HCT116 (cell line): ENCODE measurements at regions of chr13 and their contacts with region 1.

Region 1: DNA sequence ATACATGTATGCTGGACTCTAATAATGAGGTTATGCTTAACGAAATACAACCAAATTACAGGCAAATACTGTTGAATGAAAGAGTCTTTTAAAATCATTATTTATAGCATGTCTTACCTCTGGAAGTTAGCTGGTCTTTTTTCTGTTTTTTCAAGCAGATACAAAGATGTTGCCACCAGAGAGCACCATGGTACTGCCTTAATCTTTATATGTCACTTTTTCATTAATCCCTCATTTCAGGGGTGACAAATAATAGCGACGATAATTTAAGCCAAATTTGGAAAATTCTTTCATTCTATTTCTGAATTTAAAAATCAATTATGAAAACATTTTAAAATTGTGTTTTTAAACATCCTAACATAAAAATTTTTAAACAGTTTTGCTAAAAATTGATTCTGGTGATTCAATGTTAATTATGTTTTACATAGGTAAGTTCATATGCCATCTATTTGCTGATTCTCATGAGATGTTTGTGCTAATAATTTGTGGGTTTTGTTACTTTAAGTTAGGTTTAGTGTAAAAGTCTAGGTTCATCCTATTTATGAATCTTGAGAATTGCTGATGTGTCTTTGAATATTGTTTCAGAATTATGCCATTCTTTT is 379.3 kb upstream of the SGCG start:
- DNase-seq: no peak
- ATAC-seq: no peak
- H3K4me3 ChIP-seq: no peak overlapping the region
- H3K27ac ChIP-seq: no peak overlapping the region
- H3K4me1 ChIP-seq: no peaks in the 10 kb centered on the region
- H3K27me3 ChIP-seq: no peaks in the 10 kb centered on the region
- CTCF ChIP-seq: peak in 2 of 3 experiments; percentile 16 to 39; a peak in 3 of 6 replicates
- POLR2A ChIP-seq: no peak
- RAD21 ChIP-seq: peak; percentile 54

Region 2: GRCh38 chr13:20942938-20943559 is 1858.5 kb before region 1 on chr13:
- CTCF ChIA-PET with region 1: interaction called, 11 read pairs
- POLR2A ChIA-PET with region 1: no interaction called
- RAD21 ChIA-PET with region 1: no interaction called
- intact Hi-C with region 1: loop called (anchors 2 kb)
- DNase-seq: no peak
- ATAC-seq: no peak
- H3K4me3 ChIP-seq: no peak overlapping the region
- H3K27ac ChIP-seq: no peak overlapping the region
- H3K4me1 ChIP-seq: peaks cover 0 to 8% of the 10 kb centered on the region in 2 experiments; a peak in 2 of 4 replicates
- H3K27me3 ChIP-seq: no peaks in the 10 kb centered on the region
- CTCF ChIP-seq: no peak
- POLR2A ChIP-seq: no peak
- RAD21 ChIP-seq: no peak

Region 3: GRCh38 chr13:21483748-21484147 is 1317.8 kb before region 1 on chr13:
- CTCF ChIA-PET with region 1: no interaction called
- POLR2A ChIA-PET with region 1: no interaction called
- RAD21 ChIA-PET with region 1: no interaction called
- intact Hi-C with region 1: loop called (anchors 2 kb)
- DNase-seq: no peak
- ATAC-seq: no peak
- H3K4me3 ChIP-seq: no peak overlapping the region
- H3K27ac ChIP-seq: no peak overlapping the region
- H3K4me1 ChIP-seq: 0 out of 4 replicates have a peak, but pooled peaks cover 0 to 3% of the 10 kb centered on the region in 2 experiments
- H3K27me3 ChIP-seq: no peaks in the 10 kb centered on the region
- CTCF ChIP-seq: no peak
- POLR2A ChIP-seq: no peak
- RAD21 ChIP-seq: no peak

Region 4: GRCh38 chr13:22372261-22372660 is 429.2 kb before region 1 on chr13:
- CTCF ChIA-PET with region 1: no interaction called
- POLR2A ChIA-PET with region 1: no interaction called
- RAD21 ChIA-PET with region 1: no interaction called
- intact Hi-C with region 1: no loop called
- DNase-seq: no peak
- ATAC-seq: no peak
- H3K4me3 ChIP-seq: no peak overlapping the region
- H3K27ac ChIP-seq: no peak overlapping the region
- H3K4me1 ChIP-seq: no peaks in the 10 kb centered on the region
- H3K27me3 ChIP-seq: no peaks in the 10 kb centered on the region
- CTCF ChIP-seq: no peak
- POLR2A ChIP-seq: no peak
- RAD21 ChIP-seq: no peak

Region 5: GRCh38 chr13:23020223-23020843 is 218.8 kb after region 1 on chr13:
- CTCF ChIA-PET with region 1: interaction called, 18 read pairs
- POLR2A ChIA-PET with region 1: no interaction called
- RAD21 ChIA-PET with region 1: interaction called, 3 to 6 read pairs
- intact Hi-C with region 1: loop called (anchors 2 kb)
- DNase-seq: peak; percentile 61
- ATAC-seq: peak; percentile 100
- H3K4me3 ChIP-seq: no peak overlapping the region
- H3K27ac ChIP-seq: no peak overlapping the region
- H3K4me1 ChIP-seq: no peaks in the 10 kb centered on the region
- H3K27me3 ChIP-seq: no peaks in the 10 kb centered on the region
- CTCF ChIP-seq: peak; percentile 40 to 86 (median 84); a peak in 5 of 6 replicates
- POLR2A ChIP-seq: no peak
- RAD21 ChIP-seq: peak; percentile 49

Region 6: DNA sequence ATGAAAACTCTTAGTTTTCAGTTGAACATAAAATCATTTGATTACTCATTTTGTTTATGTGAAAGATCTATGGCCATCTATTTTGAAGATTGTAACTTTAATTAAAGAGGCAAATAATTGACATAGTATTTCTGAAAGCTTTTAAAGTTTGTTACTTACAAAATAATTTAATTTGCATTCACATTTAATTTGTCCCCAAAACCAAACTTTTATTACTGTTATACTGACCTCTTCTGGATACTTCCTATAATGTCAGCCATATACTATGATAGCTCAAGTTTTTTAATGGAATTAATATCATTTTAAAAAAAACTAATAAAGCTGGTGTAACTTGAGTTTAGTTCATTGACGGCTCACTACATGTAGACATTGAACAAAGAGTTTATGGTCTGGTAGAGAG is 374.4 kb after region 1 on chr13:
- CTCF ChIA-PET with region 1: interaction called, 34 read pairs
- POLR2A ChIA-PET with region 1: no interaction called
- RAD21 ChIA-PET with region 1: interaction called in 1 of 2 experiments, 4 read pairs
- intact Hi-C with region 1: loop called (anchors 1 kb)
- DNase-seq: peak; percentile 3
- ATAC-seq: no peak
- H3K4me3 ChIP-seq: no peak overlapping the region
- H3K27ac ChIP-seq: no peak overlapping the region
- H3K4me1 ChIP-seq: no peaks in the 10 kb centered on the region
- H3K27me3 ChIP-seq: no peaks in the 10 kb centered on the region
- CTCF ChIP-seq: peak in 1 of 3 experiments; percentile 51; a peak in 2 of 6 replicates
- POLR2A ChIP-seq: no peak
- RAD21 ChIP-seq: peak; percentile 34

Region 7: DNA sequence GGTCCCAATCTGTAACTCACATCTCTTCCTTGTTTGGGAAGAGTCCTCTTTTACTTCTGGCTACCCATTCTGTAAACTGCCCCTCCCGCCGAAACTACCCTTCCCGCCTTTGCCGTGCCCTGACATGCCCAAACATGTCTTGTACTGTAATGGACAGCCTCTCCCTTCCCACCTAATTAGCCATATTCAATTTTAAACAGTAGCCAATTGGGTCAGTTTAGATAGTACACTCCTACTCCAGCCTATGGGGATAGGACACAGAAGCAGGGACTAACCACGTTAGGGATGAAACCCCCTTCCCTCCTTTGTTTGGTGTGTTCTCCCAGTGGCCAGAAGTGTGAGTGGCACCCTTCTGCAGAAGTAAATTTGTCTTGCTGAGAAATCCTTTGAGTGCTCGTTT is 597.8 kb after region 1 on chr13:
- CTCF ChIA-PET with region 1: no interaction called
- POLR2A ChIA-PET with region 1: no interaction called
- RAD21 ChIA-PET with region 1: no interaction called
- intact Hi-C with region 1: no loop called
- DNase-seq: no peak
- ATAC-seq: no peak
- H3K4me3 ChIP-seq: no peak overlapping the region
- H3K27ac ChIP-seq: no peak overlapping the region
- H3K4me1 ChIP-seq: no peaks in the 10 kb centered on the region
- H3K27me3 ChIP-seq: no peaks in the 10 kb centered on the region
- CTCF ChIP-seq: no peak
- POLR2A ChIP-seq: no peak
- RAD21 ChIP-seq: no peak

Region 8: DNA sequence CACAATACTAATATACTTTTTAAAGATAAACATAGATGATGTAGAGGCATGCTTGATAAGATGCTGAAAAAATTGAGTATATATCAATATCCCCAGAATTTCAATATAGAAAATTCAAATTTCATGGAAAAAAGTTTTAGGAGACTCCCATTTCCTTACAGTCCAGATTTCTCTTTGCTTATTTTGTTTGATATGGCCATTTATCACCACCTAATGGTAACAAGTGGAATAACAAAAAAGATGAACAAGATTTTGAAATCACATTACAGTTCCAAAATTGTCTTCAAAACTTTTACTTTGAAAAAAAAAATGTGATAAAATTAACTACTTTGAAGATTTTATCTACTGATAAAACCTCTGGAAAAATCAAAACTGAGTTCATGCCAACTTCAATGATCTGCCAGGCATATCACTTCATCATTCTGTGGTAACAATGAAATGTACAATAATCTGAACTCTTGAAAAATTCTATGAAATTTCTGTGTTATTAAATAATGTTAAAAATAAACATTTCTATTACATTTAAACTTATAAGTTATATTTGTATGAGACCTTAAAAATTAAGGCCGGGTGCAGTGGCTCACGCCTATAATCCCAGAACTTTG is 1070.2 kb after region 1 on chr13:
- CTCF ChIA-PET with region 1: no interaction called
- POLR2A ChIA-PET with region 1: no interaction called
- RAD21 ChIA-PET with region 1: no interaction called
- intact Hi-C with region 1: loop called (anchors 10 kb)
- DNase-seq: no peak
- ATAC-seq: no peak
- H3K4me3 ChIP-seq: no peak overlapping the region
- H3K27ac ChIP-seq: no peak overlapping the region
- H3K4me1 ChIP-seq: 0 out of 4 replicates have a peak, but pooled peaks cover 0 to 2% of the 10 kb centered on the region in 2 experiments
- H3K27me3 ChIP-seq: no peaks in the 10 kb centered on the region
- CTCF ChIP-seq: peak; percentile 30 to 61 (median 37); a peak in 4 of 6 replicates
- POLR2A ChIP-seq: no peak
- RAD21 ChIP-seq: peak; percentile 54